ENCODE measurements at regions of chr6 and their contacts with region 1.

Region 1: DNA sequence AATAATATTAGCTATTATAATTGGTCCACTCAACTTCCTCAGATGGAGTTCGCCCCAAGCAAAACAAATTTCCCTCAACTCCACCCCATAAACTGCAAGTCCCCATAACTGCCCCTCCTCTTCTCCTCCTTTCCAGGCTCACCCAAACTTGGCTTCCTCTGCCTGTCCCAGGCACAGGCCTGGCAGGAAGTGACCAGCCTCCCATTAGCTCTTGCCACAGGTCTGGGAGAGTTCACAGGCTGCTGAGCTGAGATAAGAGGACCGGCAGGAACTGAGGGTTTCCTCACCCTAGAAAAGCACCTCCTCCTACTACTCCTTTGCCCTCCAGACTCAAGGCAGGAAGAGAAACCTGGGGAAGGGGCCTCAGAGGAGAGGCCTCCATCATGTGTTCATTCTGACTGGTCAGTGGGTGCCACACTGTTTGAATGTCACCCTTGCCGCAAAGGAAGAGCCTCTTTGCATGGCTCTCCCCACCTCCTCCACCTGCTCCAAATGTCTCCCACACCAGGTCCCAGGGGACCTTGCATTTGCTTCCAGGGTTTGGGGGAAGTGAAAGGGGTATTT is 24.5 kb upstream of the SMIM29 start:
- DNase-seq: peak; percentile 55 to 73
- ATAC-seq: peak; percentile 69 to 93 (median 90)
- H3K4me3 ChIP-seq: no peak overlapping the region
- H3K27ac ChIP-seq: peak overlapping the region in 9 of 10 donors; percentile 7 to 80 (median 70)
- H3K4me1 ChIP-seq: peaks cover 0 to 52% (median 38%) of the 10 kb centered on the region in 9 donors
- H3K27me3 ChIP-seq: no peaks in the 10 kb centered on the region
- CTCF ChIP-seq: no peak

Region 2: DNA sequence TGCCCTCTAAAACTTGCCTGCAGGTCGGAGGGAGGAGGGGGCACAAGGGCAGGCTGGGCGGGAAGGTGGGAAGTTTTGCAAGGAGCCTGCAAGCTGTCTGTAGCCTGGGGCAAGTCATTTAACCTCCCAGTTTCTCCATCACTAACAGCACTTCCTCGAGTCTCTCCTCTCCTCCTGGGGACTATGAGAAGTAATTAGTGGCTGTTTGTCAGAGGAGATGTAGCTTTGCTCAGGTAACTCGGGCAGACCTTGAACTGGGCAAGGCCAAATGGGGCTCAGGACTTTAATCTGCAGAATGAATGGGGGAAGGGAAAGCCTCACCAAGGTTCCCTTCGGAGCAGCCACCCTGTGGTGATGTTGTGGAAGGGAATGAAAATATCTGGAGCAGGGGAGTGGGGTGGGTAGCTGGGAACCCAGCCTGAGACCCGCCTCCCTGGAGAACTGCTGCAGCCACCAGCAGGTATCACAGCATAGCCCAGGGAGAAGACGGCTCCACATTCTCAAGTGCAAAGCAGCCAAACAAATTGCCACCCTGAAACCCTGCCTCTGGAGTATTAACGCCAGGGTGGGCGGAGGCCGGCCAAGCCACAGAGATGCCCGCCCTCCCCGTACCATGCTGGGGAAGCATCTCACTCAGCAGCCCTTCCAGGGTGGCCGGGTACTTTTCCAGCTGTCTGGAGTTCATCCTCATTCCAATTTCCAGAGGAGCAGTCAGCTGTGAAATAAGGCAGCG is 478.3 kb before region 1 on chr6:
- intact Hi-C with region 1: no loop called
- DNase-seq: no peak
- ATAC-seq: peak in 1 of 8 donors; percentile 16
- H3K4me3 ChIP-seq: no peak overlapping the region
- H3K27ac ChIP-seq: no peak overlapping the region
- H3K4me1 ChIP-seq: no peaks in the 10 kb centered on the region
- H3K27me3 ChIP-seq: peaks cover 0 to 48% (median 9%) of the 10 kb centered on the region in 7 donors
- CTCF ChIP-seq: no peak

Region 3: GRCh38 chr6:34386316-34387137 is 113.2 kb after region 1 on chr6:
- intact Hi-C with region 1: loop called in 3 of 10 experiments (anchors 5 to 10 kb)
- DNase-seq: no peak
- ATAC-seq: no peak
- H3K4me3 ChIP-seq: no peak overlapping the region
- H3K27ac ChIP-seq: no peak overlapping the region
- H3K4me1 ChIP-seq: peaks cover 21 to 86% (median 72%) of the 10 kb centered on the region in 9 donors
- H3K27me3 ChIP-seq: no peaks in the 10 kb centered on the region
- CTCF ChIP-seq: no peak